AG04450 (cell line): ENCODE measurements at regions of chr9 and their contacts with region 1.

Region 1: GRCh38 chr9:136488247-136489214 is 5.7 kb upstream of the SEC16A start:
- DNase-seq: no peak
- H3K4me3 ChIP-seq: no peak overlapping the region
- H3K27ac ChIP-seq: no peak overlapping the region
- H3K27me3 ChIP-seq: peaks cover 16% of the 10 kb centered on the region
- CTCF ChIP-seq: peak; percentile 96

Region 2: DNA sequence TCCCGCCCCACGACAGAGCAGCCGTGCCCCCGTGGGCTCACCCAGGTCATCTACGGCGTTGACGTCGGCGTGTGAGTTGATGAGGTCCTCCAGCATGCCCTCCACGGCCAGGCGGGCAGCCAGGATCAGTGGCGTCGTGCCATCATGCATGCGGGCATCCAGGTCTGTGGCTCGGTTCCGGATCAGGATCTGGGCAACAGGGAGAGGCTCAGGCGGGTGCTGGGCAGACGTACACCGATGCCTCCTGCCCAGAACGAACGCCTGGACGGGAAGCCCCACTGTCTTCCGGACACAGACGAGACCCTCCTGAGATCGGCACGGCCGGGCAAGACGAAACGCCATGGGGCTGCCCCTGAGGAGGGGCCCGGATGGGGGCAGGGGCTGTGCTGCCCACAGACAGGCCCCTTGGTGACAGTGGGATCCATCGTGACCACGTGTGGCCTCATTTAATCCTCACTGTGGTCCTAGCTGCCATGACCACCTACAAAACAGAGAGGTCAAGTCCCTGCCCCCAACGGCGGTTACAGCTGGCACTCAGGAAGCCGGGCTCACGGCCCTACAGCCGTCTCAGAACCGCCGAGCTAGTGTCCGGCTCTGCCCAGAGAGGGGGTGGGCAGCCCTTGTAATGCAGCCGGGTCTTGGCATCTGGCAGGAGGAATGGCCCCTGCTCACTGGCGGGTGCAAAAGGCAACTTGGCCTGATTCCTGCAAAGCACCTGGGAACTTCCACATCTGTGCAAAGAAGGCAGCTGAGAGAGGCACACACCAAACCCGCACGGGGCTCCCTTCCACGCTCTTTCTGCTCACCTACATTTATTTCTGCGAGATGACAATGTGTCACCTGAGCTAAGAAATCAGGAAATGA is 10.8 kb after region 1 on chr9:
- CTCF ChIA-PET with region 1: interaction called, 11 read pairs
- POLR2A ChIA-PET with region 1: no interaction called
- DNase-seq: no peak
- H3K4me3 ChIP-seq: no peak overlapping the region
- H3K27ac ChIP-seq: no peak overlapping the region
- H3K27me3 ChIP-seq: no peaks in the 10 kb centered on the region
- CTCF ChIP-seq: no peak

Region 3: GRCh38 chr9:136631038-136632000 is 142.8 kb after region 1 on chr9:
- CTCF ChIA-PET with region 1: interaction called, 183 read pairs
- POLR2A ChIA-PET with region 1: interaction called, 7 read pairs
- DNase-seq: peak; percentile 59
- H3K4me3 ChIP-seq: no peak overlapping the region
- H3K27ac ChIP-seq: no peak overlapping the region
- H3K27me3 ChIP-seq: peaks cover 14% of the 10 kb centered on the region
- CTCF ChIP-seq: peak; percentile 93